ENCODE measurements at regions of chr1 and their contacts with region 1.

Region 1: GRCh38 chr1:155859234-155859829 is at the start of gene SYT11:
- DNase-seq: peak; percentile 96
- CTCF ChIP-seq: no peak

Region 2: DNA sequence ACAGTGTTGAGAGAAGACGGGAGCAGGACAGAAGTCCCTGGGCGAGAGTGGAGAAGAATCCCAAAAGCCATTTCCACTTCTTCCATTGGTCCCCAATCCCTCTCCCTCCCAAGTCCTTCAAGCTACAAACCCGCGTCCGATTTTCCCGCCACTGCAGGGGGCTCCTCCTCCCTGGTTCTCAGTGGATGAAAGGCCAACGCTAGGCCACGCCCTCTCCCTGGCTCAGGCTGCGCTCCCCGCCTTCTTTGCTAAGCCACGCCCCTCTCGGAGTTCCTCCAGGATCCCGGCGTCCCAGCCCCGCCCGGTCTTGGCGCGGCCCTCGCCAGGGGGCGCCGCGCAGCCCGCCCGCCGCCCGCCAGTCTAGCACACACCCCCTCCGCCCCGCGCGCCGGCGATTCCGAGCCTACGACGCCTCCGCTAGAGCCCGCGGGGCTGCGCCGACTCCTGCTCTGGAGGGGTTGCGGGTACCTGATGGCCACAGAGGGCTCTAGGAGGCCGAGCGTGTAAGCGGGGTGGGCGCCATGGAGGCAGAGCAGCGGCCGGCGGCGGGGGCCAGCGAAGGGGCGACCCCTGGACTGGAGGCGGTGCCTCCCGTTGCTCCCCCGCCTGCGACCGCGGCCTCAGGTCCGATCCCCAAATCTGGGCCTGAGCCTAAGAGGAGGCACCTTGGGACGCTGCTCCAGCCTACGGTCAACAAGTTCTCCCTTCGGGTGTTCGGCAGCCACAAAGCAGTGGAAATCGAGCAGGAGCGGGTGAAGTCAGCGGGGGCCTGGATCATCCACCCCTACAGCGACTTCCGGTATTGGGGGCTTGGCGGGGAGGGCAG is 582.0 kb before region 1 on chr1 and contains the start of gene HCN3:
- CTCF ChIA-PET with region 1: no interaction called
- POLR2A ChIA-PET with region 1: interaction called, 10 read pairs
- DNase-seq: peak; percentile 98
- CTCF ChIP-seq: peak; percentile 52

Region 3: GRCh38 chr1:155871390-155871789 is 12.1 kb after region 1 on chr1:
- CTCF ChIA-PET with region 1: interaction called, 27 read pairs
- POLR2A ChIA-PET with region 1: interaction called, 3 read pairs
- DNase-seq: no peak
- CTCF ChIP-seq: no peak

Measured in GM10248 (cell line).